Cardiac septum (tissue), 1 donor: ENCODE measurements at regions of chr18 and their contacts with region 1.

Region 1: GRCh38 chr18:11654736-11655605 is 34.1 kb upstream of the GNAL start:
- DNase-seq: no peak

Region 2: DNA sequence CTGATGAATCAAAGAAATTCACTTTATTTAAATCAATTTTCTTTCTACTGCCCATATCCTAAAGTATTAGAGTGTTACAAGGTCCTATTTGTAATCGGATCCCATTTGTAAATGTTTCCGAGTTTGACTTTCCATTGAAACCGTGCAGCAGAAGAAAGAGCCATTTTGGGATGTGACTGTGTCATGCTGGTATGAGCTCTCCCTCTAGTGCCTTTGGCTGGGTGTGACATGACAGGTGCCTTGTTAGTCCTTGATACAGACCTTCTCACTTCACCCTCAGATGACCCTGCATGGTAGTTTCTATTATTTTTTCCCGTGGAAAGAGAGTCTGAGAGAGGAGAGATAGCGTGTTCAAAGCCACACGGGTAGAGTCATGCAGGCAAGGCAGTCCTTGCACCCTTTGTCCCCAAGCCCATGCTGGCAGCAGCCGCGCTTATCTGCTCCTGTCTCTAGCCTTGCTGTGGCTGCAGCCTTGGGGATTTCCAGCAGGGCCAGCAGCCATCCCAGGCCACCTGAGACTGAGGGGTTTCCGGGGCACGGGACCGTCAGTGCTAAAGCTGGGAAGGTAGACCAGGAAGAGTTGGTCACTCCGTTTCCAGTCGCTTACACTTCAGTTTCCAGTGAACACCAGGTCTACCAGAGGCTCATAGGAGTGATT is 217.6 kb after region 1 on chr18:
- intact Hi-C with region 1: loop called (anchors 10 kb)
- DNase-seq: no peak